ENCODE measurements at regions of chr17 and their contacts with region 1.

Region 1: GRCh38 chr17:30323895-30324319 is 9.9 kb downstream of the TMIGD1 start:
- DNase-seq: no peak
- ATAC-seq: no peak
- H3K4me3 ChIP-seq: no peak overlapping the region
- H3K27ac ChIP-seq: no peak overlapping the region
- H3K4me1 ChIP-seq: peaks cover 2% of the 10 kb centered on the region; the same call in 1 of the 2 replicates
- H3K27me3 ChIP-seq: peaks cover 22% of the 10 kb centered on the region
- CTCF ChIP-seq: no peak
- POLR2A ChIP-seq: no peak
- RAD21 ChIP-seq: no peak

Region 2: GRCh38 chr17:30074730-30075129 is 249.2 kb before region 1 on chr17:
- CTCF ChIA-PET with region 1: no interaction called
- POLR2A ChIA-PET with region 1: no interaction called
- dilution Hi-C with region 1: no loop called
- in situ Hi-C with region 1: no loop called
- intact Hi-C with region 1: no loop called
- DNase-seq: peak; percentile 21
- ATAC-seq: no peak
- H3K4me3 ChIP-seq: no peak overlapping the region
- H3K27ac ChIP-seq: no peak overlapping the region
- H3K4me1 ChIP-seq: no peaks in the 10 kb centered on the region
- H3K27me3 ChIP-seq: peaks cover 33% of the 10 kb centered on the region
- CTCF ChIP-seq: no peak
- POLR2A ChIP-seq: no peak
- RAD21 ChIP-seq: no peak

Region 3: GRCh38 chr17:30093463-30094147 is 230.3 kb before region 1 on chr17:
- CTCF ChIA-PET with region 1: no interaction called
- POLR2A ChIA-PET with region 1: no interaction called
- dilution Hi-C with region 1: no loop called
- in situ Hi-C with region 1: no loop called
- intact Hi-C with region 1: no loop called
- DNase-seq: peak; percentile 58
- ATAC-seq: peak; percentile 76
- H3K4me3 ChIP-seq: no peak overlapping the region
- H3K27ac ChIP-seq: no peak overlapping the region
- H3K4me1 ChIP-seq: peaks cover 2% of the 10 kb centered on the region
- H3K27me3 ChIP-seq: no peaks in the 10 kb centered on the region
- CTCF ChIP-seq: peak; percentile 89
- POLR2A ChIP-seq: no peak
- RAD21 ChIP-seq: peak; percentile 94

Region 4: DNA sequence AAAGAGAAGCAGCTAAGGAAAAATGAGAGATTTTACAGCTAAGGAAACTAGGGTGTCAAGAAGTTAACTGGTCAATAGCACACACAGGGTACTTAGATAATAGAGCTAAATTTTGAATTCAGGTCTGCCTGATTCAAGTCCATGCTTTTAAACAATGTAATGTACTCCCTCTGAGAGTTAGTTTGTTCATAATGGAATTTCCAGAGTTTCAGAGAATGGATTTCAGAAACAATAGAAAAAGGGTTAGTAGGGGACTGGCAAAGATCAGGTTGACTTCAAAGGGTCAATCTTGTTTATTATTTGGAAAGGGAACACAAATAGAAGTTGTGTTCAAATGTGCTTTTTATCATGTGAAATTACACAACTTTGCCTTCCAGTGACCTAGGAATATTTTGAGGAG is 189.4 kb before region 1 on chr17:
- CTCF ChIA-PET with region 1: no interaction called
- POLR2A ChIA-PET with region 1: no interaction called
- dilution Hi-C with region 1: no loop called
- in situ Hi-C with region 1: no loop called
- intact Hi-C with region 1: loop called (anchors 5 kb)
- DNase-seq: no peak
- ATAC-seq: no peak
- H3K4me3 ChIP-seq: no peak overlapping the region
- H3K27ac ChIP-seq: no peak overlapping the region
- H3K4me1 ChIP-seq: no peaks in the 10 kb centered on the region
- H3K27me3 ChIP-seq: no peaks in the 10 kb centered on the region
- CTCF ChIP-seq: no peak
- POLR2A ChIP-seq: no peak
- RAD21 ChIP-seq: no peak

Region 5: DNA sequence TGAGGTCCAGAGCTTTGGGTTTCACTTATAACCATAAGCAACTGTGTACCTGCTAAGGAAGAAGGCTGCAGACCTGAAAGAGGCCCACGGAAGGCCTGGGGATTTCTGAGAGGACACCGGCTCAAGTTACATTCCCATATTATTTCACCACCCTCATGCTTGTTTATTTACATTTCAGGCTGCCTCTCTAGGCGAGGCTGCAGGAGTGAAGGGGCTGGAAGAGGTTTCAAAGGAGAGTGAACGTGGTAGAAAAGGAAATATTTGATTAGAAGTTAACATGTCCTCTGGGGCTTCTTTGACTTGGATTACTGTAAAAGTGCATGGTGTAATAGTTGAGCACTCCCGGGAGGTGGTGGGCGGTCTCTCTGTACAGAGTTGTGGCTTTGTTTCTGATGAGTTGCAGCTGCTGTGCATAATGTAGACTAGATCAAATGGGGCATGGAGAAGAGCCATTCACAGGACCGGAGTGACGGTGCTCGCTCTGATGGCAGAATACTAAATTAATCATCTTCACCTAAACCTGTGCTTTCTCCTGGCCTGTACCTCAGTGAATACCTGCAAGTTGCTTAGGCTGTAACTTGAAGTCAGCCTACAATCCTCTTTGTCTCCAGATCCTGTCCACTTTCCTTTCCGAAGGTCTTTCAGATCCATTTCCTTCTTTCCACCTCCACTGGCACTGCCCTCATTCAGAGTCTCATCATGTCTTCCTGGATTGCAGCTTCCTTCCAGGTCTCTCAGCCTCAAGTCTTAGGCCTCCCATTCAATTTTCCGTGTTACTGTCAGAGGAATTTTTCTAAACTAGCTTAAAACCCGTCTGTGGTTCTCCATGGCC is 52.9 kb after region 1 on chr17:
- CTCF ChIA-PET with region 1: no interaction called
- POLR2A ChIA-PET with region 1: no interaction called
- dilution Hi-C with region 1: no loop called
- in situ Hi-C with region 1: no loop called
- intact Hi-C with region 1: no loop called
- DNase-seq: peak; percentile 87
- ATAC-seq: peak; percentile 36
- H3K4me3 ChIP-seq: no peak overlapping the region
- H3K27ac ChIP-seq: peak overlapping the region; percentile 21; the same call in 1 of the 2 replicates
- H3K4me1 ChIP-seq: peaks cover 20% of the 10 kb centered on the region
- H3K27me3 ChIP-seq: no peaks in the 10 kb centered on the region
- CTCF ChIP-seq: no peak
- POLR2A ChIP-seq: no peak
- RAD21 ChIP-seq: no peak

Region 6: GRCh38 chr17:30716461-30717300 is 392.8 kb after region 1 on chr17:
- CTCF ChIA-PET with region 1: no interaction called
- POLR2A ChIA-PET with region 1: no interaction called
- dilution Hi-C with region 1: no loop called
- in situ Hi-C with region 1: loop called (anchors 25 kb)
- intact Hi-C with region 1: no loop called
- DNase-seq: peak; percentile 16
- ATAC-seq: no peak
- H3K4me3 ChIP-seq: no peak overlapping the region
- H3K27ac ChIP-seq: no peak overlapping the region
- H3K4me1 ChIP-seq: no peaks in the 10 kb centered on the region
- H3K27me3 ChIP-seq: no peaks in the 10 kb centered on the region
- CTCF ChIP-seq: peak; percentile 24; the same call in 1 of the 2 replicates
- POLR2A ChIP-seq: no peak
- RAD21 ChIP-seq: no peak

Measured in IMR-90 (cell line).